K562 (cell line): ENCODE measurements at regions of chr2 and their contacts with region 1.

Region 1: GRCh38 chr2:63189026-63189425 is 138.4 kb downstream of the OTX1 start:
- DNase-seq: peak; percentile 20 to 65 (median 44)
- ATAC-seq: peak; percentile 98
- H3K4me3 ChIP-seq: no peak overlapping the region
- H3K27ac ChIP-seq: no peak overlapping the region
- H3K4me1 ChIP-seq: no peaks in the 10 kb centered on the region
- H3K27me3 ChIP-seq: peaks cover 0 to 4% of the 10 kb centered on the region in 2 experiments; a peak in 1 of 5 replicates
- CTCF ChIP-seq: peak; percentile 78 to 84 (median 81)
- EP300 ChIP-seq: no peak
- POLR2A ChIP-seq: no peak
- RAD21 ChIP-seq: peak; percentile 13 to 77; a peak in 2 of 4 replicates

Region 2: DNA sequence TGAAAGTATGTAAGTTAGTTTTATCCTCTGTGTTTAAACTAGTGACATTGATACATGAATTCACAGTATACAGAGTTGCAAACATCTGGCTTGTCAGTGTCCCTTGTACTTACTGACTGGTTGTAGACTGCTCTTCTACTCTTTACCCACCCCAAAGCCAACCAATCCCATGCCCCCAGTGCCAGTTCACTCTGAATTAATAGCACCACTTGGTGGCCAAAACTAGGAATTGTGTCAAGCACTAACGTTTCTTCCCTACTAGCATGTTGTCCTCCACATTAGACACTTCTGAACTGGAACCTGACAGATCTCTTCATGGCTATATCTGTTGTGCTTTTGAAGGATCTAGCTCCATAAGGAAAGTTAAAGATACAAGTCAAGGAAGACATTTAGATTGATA is 165.6 kb before region 1 on chr2:
- CTCF ChIA-PET with region 1: no interaction called
- POLR2A ChIA-PET with region 1: no interaction called
- in situ Hi-C with region 1: no loop called
- intact Hi-C with region 1: no loop called
- DNase-seq: peak; percentile 23 to 47 (median 34)
- ATAC-seq: peak; percentile 80
- H3K4me3 ChIP-seq: no peak overlapping the region
- H3K27ac ChIP-seq: no peak overlapping the region
- H3K4me1 ChIP-seq: no peaks in the 10 kb centered on the region
- H3K27me3 ChIP-seq: no peaks in the 10 kb centered on the region
- CTCF ChIP-seq: peak; percentile 42 to 50 (median 47); a peak in 5 of 6 replicates
- EP300 ChIP-seq: no peak
- POLR2A ChIP-seq: no peak
- RAD21 ChIP-seq: peak; percentile 18 to 72; a peak in 2 of 4 replicates

Region 3: GRCh38 chr2:63166917-63167316 is 22.1 kb before region 1 on chr2:
- CTCF ChIA-PET with region 1: no interaction called
- POLR2A ChIA-PET with region 1: no interaction called
- in situ Hi-C with region 1: no loop called
- intact Hi-C with region 1: no loop called
- DNase-seq: no peak
- ATAC-seq: no peak
- H3K4me3 ChIP-seq: no peak overlapping the region
- H3K27ac ChIP-seq: no peak overlapping the region
- H3K4me1 ChIP-seq: no peaks in the 10 kb centered on the region
- H3K27me3 ChIP-seq: no peaks in the 10 kb centered on the region
- CTCF ChIP-seq: no peak
- EP300 ChIP-seq: no peak
- POLR2A ChIP-seq: no peak
- RAD21 ChIP-seq: no peak

Region 4: DNA sequence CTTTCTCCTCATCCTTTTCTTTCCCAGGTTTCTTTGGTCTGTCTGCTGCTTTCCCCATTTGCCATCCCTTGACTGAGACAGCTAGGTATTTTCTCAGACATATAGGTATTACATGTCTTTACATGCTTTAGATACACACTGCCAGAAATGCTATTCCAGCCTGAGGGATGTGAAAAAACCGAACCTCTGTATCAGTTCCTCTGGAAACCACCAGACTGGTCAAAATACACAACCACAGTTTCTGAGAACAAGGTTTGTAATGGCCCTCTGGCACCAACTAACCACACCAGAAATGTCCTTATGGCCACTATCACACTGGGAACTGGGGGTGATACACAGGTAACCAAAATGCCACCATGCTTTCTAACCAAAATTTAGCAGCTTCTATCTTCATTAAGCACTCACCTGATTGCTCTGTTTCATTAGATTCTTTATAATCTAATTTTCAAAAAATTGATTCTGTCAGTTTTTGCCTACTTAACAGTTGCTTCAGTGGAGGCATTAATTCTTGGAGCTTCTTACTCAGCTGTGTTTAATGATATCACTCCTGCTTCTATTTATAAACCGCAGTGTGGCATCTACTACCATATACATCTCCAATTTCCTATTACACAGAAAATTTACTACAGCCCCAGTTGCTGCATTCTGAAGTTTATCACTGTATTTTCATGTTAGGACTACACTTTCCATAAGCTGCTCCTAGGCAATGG is 155.7 kb after region 1 on chr2:
- CTCF ChIA-PET with region 1: no interaction called
- POLR2A ChIA-PET with region 1: no interaction called
- in situ Hi-C with region 1: no loop called
- intact Hi-C with region 1: no loop called
- DNase-seq: no peak
- ATAC-seq: no peak
- H3K4me3 ChIP-seq: no peak overlapping the region
- H3K27ac ChIP-seq: no peak overlapping the region
- H3K4me1 ChIP-seq: no peaks in the 10 kb centered on the region
- H3K27me3 ChIP-seq: no peaks in the 10 kb centered on the region
- CTCF ChIP-seq: no peak
- EP300 ChIP-seq: no peak
- POLR2A ChIP-seq: no peak
- RAD21 ChIP-seq: no peak

Region 5: GRCh38 chr2:63488118-63488713 is 299.2 kb after region 1 on chr2:
- CTCF ChIA-PET with region 1: no interaction called
- POLR2A ChIA-PET with region 1: no interaction called
- in situ Hi-C with region 1: no loop called
- intact Hi-C with region 1: loop called (anchors 10 kb)
- DNase-seq: peak; percentile 8 to 35 (median 12)
- ATAC-seq: peak; percentile 52; the same call in 1 of the 3 replicates
- H3K4me3 ChIP-seq: no peak overlapping the region
- H3K27ac ChIP-seq: no peak overlapping the region
- H3K4me1 ChIP-seq: no peaks in the 10 kb centered on the region
- H3K27me3 ChIP-seq: no peaks in the 10 kb centered on the region
- CTCF ChIP-seq: peak; percentile 16 to 66 (median 46); a peak in 4 of 6 replicates
- EP300 ChIP-seq: no peak
- POLR2A ChIP-seq: no peak
- RAD21 ChIP-seq: peak; percentile 56 to 67